ENCODE measurements at regions of chr12 and their contacts with region 1.

Region 1: GRCh38 chr12:109428037-109428629 is 49.0 kb downstream of the KCTD10 start:
- DNase-seq: peak; percentile 76
- H3K4me3 ChIP-seq: no peak overlapping the region
- H3K27ac ChIP-seq: no peak overlapping the region
- H3K4me1 ChIP-seq: no peaks in the 10 kb centered on the region
- CTCF ChIP-seq: peak; percentile 96

Region 2: GRCh38 chr12:109446869-109447268 is 18.7 kb after region 1 on chr12:
- CTCF ChIA-PET with region 1: no interaction called
- POLR2A ChIA-PET with region 1: no interaction called
- intact Hi-C with region 1: loop called (anchors 1 kb)
- DNase-seq: no peak
- H3K4me3 ChIP-seq: no peak overlapping the region
- H3K27ac ChIP-seq: no peak overlapping the region
- H3K4me1 ChIP-seq: no peaks in the 10 kb centered on the region
- CTCF ChIP-seq: no peak

Region 3: GRCh38 chr12:110124184-110124995 is 696.3 kb after region 1 on chr12 and contains the start of gene IFT81:
- CTCF ChIA-PET with region 1: interaction called, 13 read pairs
- POLR2A ChIA-PET with region 1: no interaction called
- intact Hi-C with region 1: no loop called
- DNase-seq: peak; percentile 94
- H3K4me3 ChIP-seq: peak within 1 kb of the TSS; percentile 94
- H3K27ac ChIP-seq: peak within 1 kb of the TSS; percentile 19
- H3K4me1 ChIP-seq: peaks cover 14% of the 10 kb centered on the region
- CTCF ChIP-seq: no peak
- total RNA-seq, gene IFT81: 5.6 and 7.2 TPM in 2 replicates